HepG2 (cell line): ENCODE measurements at regions of chr10 and their contacts with region 1.

Region 1: GRCh38 chr10:103025696-103026095 is 107.6 kb downstream of the CNNM2 start:
- DNase-seq: peak; percentile 90
- ATAC-seq: peak; percentile 89
- H3K4me3 ChIP-seq: no peak overlapping the region
- H3K27ac ChIP-seq: peak overlapping the region; percentile 63
- H3K4me1 ChIP-seq: peaks cover 49% of the 10 kb centered on the region
- H3K27me3 ChIP-seq: no peaks in the 10 kb centered on the region
- CTCF ChIP-seq: no peak
- EP300 ChIP-seq: peak in 1 of 2 experiments; percentile 88; a peak in 2 of 4 replicates
- POLR2A ChIP-seq: no peak
- RAD21 ChIP-seq: no peak

Region 2: GRCh38 chr10:102927311-102928010 is 98.2 kb before region 1 on chr10:
- CTCF ChIA-PET with region 1: no interaction called
- POLR2A ChIA-PET with region 1: no interaction called
- in situ Hi-C with region 1: no loop called
- intact Hi-C with region 1: no loop called
- DNase-seq: no peak
- ATAC-seq: no peak
- H3K4me3 ChIP-seq: no peak overlapping the region
- H3K27ac ChIP-seq: no peak overlapping the region
- H3K4me1 ChIP-seq: peaks cover 21% of the 10 kb centered on the region
- H3K27me3 ChIP-seq: no peaks in the 10 kb centered on the region; a peak in 1 of 5 replicates
- CTCF ChIP-seq: no peak
- EP300 ChIP-seq: no peak
- POLR2A ChIP-seq: no peak
- RAD21 ChIP-seq: no peak

Region 3: DNA sequence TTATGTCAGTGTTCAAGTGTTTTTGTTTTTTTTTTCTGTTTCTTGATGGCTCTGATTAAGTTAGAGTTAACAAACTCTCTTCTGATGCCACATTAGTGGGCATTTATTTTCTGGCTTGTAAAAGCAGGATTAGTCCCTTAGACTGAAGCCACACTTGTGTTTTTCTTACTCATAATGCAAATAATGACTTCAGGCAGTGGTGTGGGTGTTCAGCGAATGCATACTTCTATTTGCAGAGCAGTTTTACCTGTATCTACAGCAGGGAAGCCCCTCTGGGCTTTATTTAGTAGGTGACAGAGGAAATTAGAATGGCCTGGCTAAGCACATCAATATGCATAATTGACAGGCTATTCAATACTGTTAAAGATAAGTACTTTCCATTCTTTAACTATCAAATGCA is 27.7 kb before region 1 on chr10:
- CTCF ChIA-PET with region 1: no interaction called
- POLR2A ChIA-PET with region 1: no interaction called
- in situ Hi-C with region 1: no loop called
- intact Hi-C with region 1: loop called (anchors 5 kb)
- DNase-seq: peak; percentile 65
- ATAC-seq: peak; percentile 81
- H3K4me3 ChIP-seq: no peak overlapping the region
- H3K27ac ChIP-seq: peak overlapping the region; percentile 46
- H3K4me1 ChIP-seq: peaks cover 16% of the 10 kb centered on the region
- H3K27me3 ChIP-seq: no peaks in the 10 kb centered on the region
- CTCF ChIP-seq: no peak
- EP300 ChIP-seq: 0 out of 4 replicates have a peak, but pooled peaks of 1 of the 2 experiments have one; percentile 13
- POLR2A ChIP-seq: no peak
- RAD21 ChIP-seq: no peak

Region 4: GRCh38 chr10:103111031-103111917 is 85.6 kb after region 1 on chr10:
- CTCF ChIA-PET with region 1: no interaction called
- POLR2A ChIA-PET with region 1: no interaction called
- in situ Hi-C with region 1: no loop called
- intact Hi-C with region 1: no loop called
- DNase-seq: peak; percentile 15
- ATAC-seq: peak; percentile 65
- H3K4me3 ChIP-seq: no peak overlapping the region
- H3K27ac ChIP-seq: peak overlapping the region; percentile 6
- H3K4me1 ChIP-seq: peaks cover 37% of the 10 kb centered on the region
- H3K27me3 ChIP-seq: no peaks in the 10 kb centered on the region
- CTCF ChIP-seq: no peak
- EP300 ChIP-seq: no peak
- POLR2A ChIP-seq: no peak
- RAD21 ChIP-seq: no peak

Region 5: GRCh38 chr10:103139803-103140202 is 114.1 kb after region 1 on chr10:
- CTCF ChIA-PET with region 1: no interaction called
- POLR2A ChIA-PET with region 1: no interaction called
- in situ Hi-C with region 1: no loop called
- intact Hi-C with region 1: no loop called
- DNase-seq: no peak
- ATAC-seq: no peak
- H3K4me3 ChIP-seq: no peak overlapping the region
- H3K27ac ChIP-seq: no peak overlapping the region
- H3K4me1 ChIP-seq: peaks cover 21% of the 10 kb centered on the region
- H3K27me3 ChIP-seq: no peaks in the 10 kb centered on the region
- CTCF ChIP-seq: no peak
- EP300 ChIP-seq: no peak
- POLR2A ChIP-seq: no peak
- RAD21 ChIP-seq: no peak